ENCODE measurements at regions of chr13 and their contacts with region 1.

Region 1: GRCh38 chr13:51286135-51287002 is 53.1 kb upstream of the SERPINE3 start:
- DNase-seq: peak; percentile 78 to 91 (median 88)
- H3K4me3 ChIP-seq: peak overlapping the region in 12 of 59 donors; percentile 7 to 30 (median 21)
- H3K27ac ChIP-seq: peak overlapping the region in 40 of 59 donors; percentile 4 to 79 (median 54)
- H3K27me3 ChIP-seq: no peaks in the 10 kb centered on the region
- CTCF ChIP-seq: peak; percentile 92 to 99 (median 97)

Region 2: GRCh38 chr13:51148952-51149573 is 137.3 kb before region 1 on chr13:
- intact Hi-C with region 1: loop called (anchors 1 to 2 kb)
- DNase-seq: peak in 8 of 10 donors; percentile 49 to 70 (median 57)
- H3K4me3 ChIP-seq: no peak overlapping the region
- H3K27ac ChIP-seq: peak overlapping the region in 19 of 59 donors; percentile 1 to 74 (median 41)
- H3K27me3 ChIP-seq: no peaks in the 10 kb centered on the region
- CTCF ChIP-seq: peak; percentile 50 to 86 (median 75)

Region 3: GRCh38 chr13:51364404-51365008 is 78.1 kb after region 1 on chr13:
- intact Hi-C with region 1: no loop called
- DNase-seq: no peak
- H3K4me3 ChIP-seq: no peak overlapping the region
- H3K27ac ChIP-seq: peak overlapping the region in 1 of 59 donors; percentile 9
- H3K27me3 ChIP-seq: no peaks in the 10 kb centered on the region
- CTCF ChIP-seq: no peak

Region 4: GRCh38 chr13:51435002-51435578 is 148.7 kb after region 1 on chr13:
- intact Hi-C with region 1: loop called in 1 of 2 experiments (anchors 10 kb)
- DNase-seq: no peak
- H3K4me3 ChIP-seq: no peak overlapping the region
- H3K27ac ChIP-seq: no peak overlapping the region
- H3K27me3 ChIP-seq: no peaks in the 10 kb centered on the region
- CTCF ChIP-seq: peak; percentile 20 to 72 (median 54)

Region 5: DNA sequence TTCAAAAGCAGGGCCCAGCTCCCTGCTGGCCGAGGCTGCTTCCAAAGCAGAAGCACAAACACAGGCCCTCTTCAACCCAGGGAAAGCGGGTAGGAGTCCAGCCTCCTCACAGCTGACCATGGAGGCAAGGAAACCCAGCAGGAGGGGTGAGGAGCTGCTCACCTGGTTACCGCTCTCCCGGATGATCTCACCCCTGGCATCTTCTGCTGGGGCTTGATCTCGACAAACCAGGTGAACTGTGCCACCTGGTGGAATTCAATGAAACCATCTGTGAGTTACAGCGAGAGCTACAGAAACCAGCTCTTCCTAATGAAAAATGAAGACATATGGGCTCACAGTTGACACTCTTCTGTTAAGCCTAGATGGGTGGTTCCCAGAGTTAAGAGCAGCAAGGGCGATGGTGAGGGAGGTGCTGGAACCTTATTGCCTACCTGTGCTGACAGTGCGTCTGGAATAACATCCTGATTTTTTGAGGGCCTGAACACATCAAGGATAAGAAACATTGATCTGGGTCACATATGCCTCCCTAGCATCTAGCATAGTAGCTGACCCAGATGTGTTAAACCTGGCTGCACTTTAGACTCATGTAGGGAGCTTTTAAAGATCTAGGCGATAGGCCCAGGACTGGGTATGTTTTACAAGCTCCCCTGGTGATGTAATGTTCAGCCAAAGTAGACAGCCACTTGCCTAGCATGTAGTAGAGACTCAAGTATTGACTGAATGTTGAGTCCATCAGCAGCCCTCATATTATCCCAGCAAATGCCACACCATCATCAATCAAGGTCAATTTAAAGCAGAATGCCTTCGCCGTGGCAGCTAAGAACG is 511.5 kb after region 1 on chr13:
- intact Hi-C with region 1: loop called in 1 of 2 experiments (anchors 10 kb)
- DNase-seq: peak in 4 of 10 donors; percentile 38 to 84 (median 58)
- H3K4me3 ChIP-seq: no peak overlapping the region
- H3K27ac ChIP-seq: peak overlapping the region in 6 of 59 donors; percentile 6 to 62 (median 18)
- H3K27me3 ChIP-seq: no peaks in the 10 kb centered on the region
- CTCF ChIP-seq: peak in 55 of 56 donors; percentile 23 to 72 (median 53)